HEK293 (cell line): ENCODE measurements at regions of chr9 and their contacts with region 1.

Region 1: DNA sequence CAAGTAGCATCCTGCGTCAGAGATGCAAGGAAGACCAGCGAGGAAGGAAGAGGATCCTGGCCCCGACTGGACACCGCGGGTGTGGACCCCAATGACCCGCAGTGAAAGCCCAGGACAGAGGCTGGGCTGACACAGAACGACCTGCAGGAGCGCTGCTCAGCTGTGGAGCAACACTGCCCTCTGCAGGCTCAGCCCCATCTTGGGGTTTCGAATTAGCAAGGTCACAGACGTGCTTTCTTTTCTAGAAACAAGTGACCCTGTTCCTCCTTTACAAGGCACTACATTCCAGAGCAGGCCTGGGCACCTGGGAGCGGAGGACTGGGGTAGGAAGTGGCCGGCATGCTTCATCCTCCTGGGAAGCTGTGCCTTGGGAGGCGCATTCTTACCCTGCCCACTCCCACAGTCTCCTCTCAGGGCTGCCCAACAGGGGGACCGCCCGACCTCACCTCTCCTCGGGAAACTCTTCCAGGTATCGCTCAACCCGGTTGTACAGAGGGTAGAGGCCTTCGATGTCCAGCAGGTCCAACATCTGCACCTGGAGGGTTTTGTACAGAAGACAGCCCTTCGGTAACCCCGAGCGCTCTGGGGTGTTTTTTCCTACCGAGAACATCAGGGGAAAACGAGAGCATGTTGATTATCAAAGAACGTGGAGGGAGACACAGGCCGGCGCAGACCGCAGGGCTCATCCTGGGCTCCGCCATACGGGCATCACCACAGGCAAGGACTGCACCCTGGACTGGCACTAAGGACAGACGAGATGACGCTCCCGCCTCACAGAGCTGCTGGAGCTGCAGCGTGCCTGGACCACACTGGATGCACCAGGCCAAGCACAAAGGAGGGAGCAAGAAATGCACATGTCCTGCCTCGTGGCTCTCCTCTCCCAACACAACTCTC is 35.0 kb downstream of the IPPK start:
- H3K4me3 ChIP-seq: no peak overlapping the region
- H3K27ac ChIP-seq: no peak overlapping the region
- H3K4me1 ChIP-seq: no peaks in the 10 kb centered on the region
- CTCF ChIP-seq: peak; percentile 88

Region 2: GRCh38 chr9:92325269-92325990 is 309.5 kb before region 1 on chr9 and contains the starts of genes CENPP and NOL8:
- CTCF ChIA-PET with region 1: interaction called, 14 read pairs
- POLR2A ChIA-PET with region 1: no interaction called
- H3K4me3 ChIP-seq: peak within 1 kb of the TSS; percentile 99
- H3K27ac ChIP-seq: peak within 1 kb of the TSS; percentile 86
- H3K4me1 ChIP-seq: no peaks in the 10 kb centered on the region
- CTCF ChIP-seq: no peak

Region 3: DNA sequence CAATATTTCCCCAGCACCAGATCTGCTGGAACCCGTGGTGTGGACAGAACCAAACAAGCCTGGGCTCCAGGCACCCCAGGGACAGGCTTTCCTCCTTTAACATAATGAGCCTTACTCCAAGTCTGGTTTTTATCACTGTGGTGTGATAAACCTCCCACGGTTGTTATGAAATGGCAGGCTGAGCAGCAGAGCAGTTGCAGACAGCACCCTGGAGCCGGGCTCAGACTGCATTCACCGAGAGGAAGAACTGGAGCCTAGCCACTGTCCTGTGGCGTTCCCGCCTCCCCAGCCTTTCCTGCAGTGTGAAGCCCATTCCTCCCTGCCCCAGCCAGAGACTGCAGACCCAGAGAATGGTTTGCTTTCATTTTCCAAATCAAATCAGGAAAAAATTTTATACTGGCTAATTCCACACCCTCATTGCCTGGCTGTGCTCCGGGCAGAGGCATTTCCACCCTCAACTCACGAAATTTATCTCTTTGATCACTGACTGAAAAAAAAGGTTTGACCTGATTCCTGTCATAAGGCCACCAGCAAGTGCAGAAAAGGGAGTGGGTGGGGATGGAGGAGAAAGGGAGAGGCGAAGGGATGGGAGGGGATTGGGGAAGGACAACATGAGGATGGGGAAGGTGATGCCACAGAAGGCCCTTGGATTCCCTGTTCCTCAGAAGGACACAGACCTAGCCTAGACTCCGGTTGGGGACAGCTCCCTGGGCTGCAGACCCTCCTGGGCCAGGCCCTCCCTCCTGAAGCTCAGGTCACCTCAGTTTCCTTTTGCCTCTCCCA is 16.1 kb after region 1 on chr9:
- CTCF ChIA-PET with region 1: interaction called, 12 read pairs
- POLR2A ChIA-PET with region 1: no interaction called
- H3K4me3 ChIP-seq: no peak overlapping the region
- H3K27ac ChIP-seq: no peak overlapping the region
- H3K4me1 ChIP-seq: peaks cover 5% of the 10 kb centered on the region; the same call in 1 of the 2 replicates
- CTCF ChIP-seq: no peak